GM12878 (cell line): ENCODE measurements at regions of chr16 and their contacts with region 1.

Region 1: GRCh38 chr16:27367461-27368357 is 34.3 kb upstream of the IL21R start:
- DNase-seq: peak; percentile 87
- ATAC-seq: peak; percentile 83
- H3K4me3 ChIP-seq: peak overlapping the region; percentile 46
- H3K27ac ChIP-seq: peak overlapping the region; percentile 95
- H3K4me1 ChIP-seq: peaks cover 34% of the 10 kb centered on the region
- H3K27me3 ChIP-seq: no peaks in the 10 kb centered on the region
- CTCF ChIP-seq: peak; percentile 84 to 91 (median 87)
- EP300 ChIP-seq: peak; percentile 72 to 86; a peak in 3 of 4 replicates
- POLR2A ChIP-seq: peak; percentile 54
- RAD21 ChIP-seq: peak; percentile 83

Region 2: DNA sequence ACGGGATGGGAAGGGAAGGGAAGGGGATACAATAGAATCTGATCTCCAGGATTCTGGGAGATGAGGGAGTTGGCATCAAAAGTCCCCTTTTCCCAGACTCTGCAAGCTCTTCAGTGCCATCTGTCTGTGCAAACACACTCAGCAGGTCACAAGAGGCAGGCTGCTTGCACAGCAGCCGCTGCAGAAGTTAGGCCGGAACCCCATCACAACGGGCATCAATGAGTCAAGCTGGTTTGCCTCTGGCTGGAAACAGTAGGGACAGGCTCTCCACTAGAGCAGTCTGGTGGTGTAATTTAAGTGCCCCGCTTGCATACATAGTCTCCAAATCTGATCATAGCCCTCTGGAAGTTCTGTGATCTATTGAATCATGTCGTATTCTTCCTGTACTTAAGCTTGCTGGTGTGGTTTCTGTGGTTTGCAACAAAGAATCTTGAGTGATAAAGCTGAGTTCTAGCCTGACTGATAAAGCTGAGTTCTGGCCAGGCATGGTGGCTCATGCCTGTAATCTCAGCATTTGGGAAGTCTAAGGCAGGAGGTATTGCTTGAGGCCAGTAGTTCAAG is 198.1 kb before region 1 on chr16:
- CTCF ChIA-PET with region 1: interaction called, 150 read pairs
- POLR2A ChIA-PET with region 1: no interaction called
- RAD21 ChIA-PET with region 1: interaction called, 13 read pairs
- SMC1A ChIA-PET with region 1: interaction called, 6 read pairs
- in situ Hi-C with region 1: no loop called
- intact Hi-C with region 1: no loop called
- DNase-seq: peak; percentile 13
- ATAC-seq: peak; percentile 84
- H3K4me3 ChIP-seq: no peak overlapping the region
- H3K27ac ChIP-seq: no peak overlapping the region
- H3K4me1 ChIP-seq: peaks cover 13% of the 10 kb centered on the region
- H3K27me3 ChIP-seq: 0 out of 4 replicates have a peak, but pooled peaks cover 0 to 2% of the 10 kb centered on the region in 2 experiments
- CTCF ChIP-seq: peak in 1 of 3 experiments; percentile 6; a peak in 2 of 6 replicates
- EP300 ChIP-seq: no peak
- POLR2A ChIP-seq: no peak
- RAD21 ChIP-seq: 0 out of 2 replicates have a peak, but pooled peaks have one; percentile 8

Region 3: GRCh38 chr16:27242868-27243590 is 124.7 kb before region 1 on chr16:
- CTCF ChIA-PET with region 1: interaction called, 259 read pairs
- POLR2A ChIA-PET with region 1: interaction called, 14 read pairs
- RAD21 ChIA-PET with region 1: interaction called, 168 read pairs
- SMC1A ChIA-PET with region 1: interaction called, 152 read pairs
- in situ Hi-C with region 1: no loop called
- intact Hi-C with region 1: no loop called
- DNase-seq: peak; percentile 71
- ATAC-seq: peak; percentile 91
- H3K4me3 ChIP-seq: peak overlapping the region; percentile 30; the same call in 1 of the 2 replicates
- H3K27ac ChIP-seq: peak overlapping the region; percentile 47
- H3K4me1 ChIP-seq: peaks cover 20% of the 10 kb centered on the region
- H3K27me3 ChIP-seq: no peaks in the 10 kb centered on the region
- CTCF ChIP-seq: no peak
- EP300 ChIP-seq: peak in 1 of 2 experiments; percentile 72; a peak in 2 of 4 replicates
- POLR2A ChIP-seq: no peak
- RAD21 ChIP-seq: no peak

Region 4: GRCh38 chr16:27286451-27286850 is 81.3 kb before region 1 on chr16:
- CTCF ChIA-PET with region 1: interaction called, 11 read pairs
- POLR2A ChIA-PET with region 1: interaction called, 4 read pairs
- RAD21 ChIA-PET with region 1: interaction called, 11 read pairs
- SMC1A ChIA-PET with region 1: interaction called, 6 read pairs
- in situ Hi-C with region 1: no loop called
- intact Hi-C with region 1: no loop called
- DNase-seq: no peak
- ATAC-seq: no peak
- H3K4me3 ChIP-seq: no peak overlapping the region
- H3K27ac ChIP-seq: no peak overlapping the region
- H3K4me1 ChIP-seq: peaks cover 40% of the 10 kb centered on the region
- H3K27me3 ChIP-seq: 0 out of 4 replicates have a peak, but pooled peaks cover 0 to 3% of the 10 kb centered on the region in 2 experiments
- CTCF ChIP-seq: no peak
- EP300 ChIP-seq: no peak
- POLR2A ChIP-seq: no peak
- RAD21 ChIP-seq: no peak

Region 5: DNA sequence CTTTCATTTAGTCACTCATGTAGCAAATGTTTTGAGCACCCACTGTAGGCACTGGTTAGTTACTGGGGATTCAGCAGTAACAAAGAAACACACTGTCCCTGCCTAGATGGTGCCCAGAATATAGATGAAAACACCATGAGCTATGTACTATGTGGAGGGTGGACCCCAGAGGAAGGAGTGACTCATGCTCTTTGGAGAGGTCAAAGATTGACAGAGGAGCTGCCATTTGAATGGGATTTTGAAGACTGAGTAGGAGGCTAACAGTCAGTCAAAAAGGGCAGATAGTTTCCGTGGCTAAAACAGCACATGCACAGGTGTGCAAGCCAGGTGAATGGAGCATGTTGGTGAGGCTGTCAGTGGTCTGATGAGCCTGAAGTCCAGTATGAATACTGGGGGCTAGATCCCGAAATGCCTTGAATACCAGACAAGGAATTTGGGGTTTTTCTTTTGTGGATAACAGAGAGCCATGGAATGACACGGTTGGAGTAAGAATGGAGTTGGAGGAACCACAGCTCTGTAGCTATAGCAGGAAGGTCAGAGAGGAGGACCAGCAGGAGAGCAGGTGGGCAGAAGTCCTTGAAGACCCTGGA is 40.4 kb after region 1 on chr16:
- CTCF ChIA-PET with region 1: interaction called, 34 read pairs
- POLR2A ChIA-PET with region 1: interaction called, 208 read pairs
- RAD21 ChIA-PET with region 1: interaction called, 224 read pairs
- SMC1A ChIA-PET with region 1: interaction called, 220 read pairs
- in situ Hi-C with region 1: no loop called
- intact Hi-C with region 1: no loop called
- DNase-seq: peak; percentile 76
- ATAC-seq: peak; percentile 51
- H3K4me3 ChIP-seq: peak overlapping the region; percentile 86
- H3K27ac ChIP-seq: peak overlapping the region; percentile 97
- H3K4me1 ChIP-seq: peaks cover 28% of the 10 kb centered on the region
- H3K27me3 ChIP-seq: no peaks in the 10 kb centered on the region
- CTCF ChIP-seq: no peak
- EP300 ChIP-seq: peak in 1 of 2 experiments; percentile 11; a peak in 1 of 4 replicates
- POLR2A ChIP-seq: peak; percentile 53; the same call in 1 of the 2 replicates
- RAD21 ChIP-seq: no peak

Region 6: GRCh38 chr16:27461483-27462171 is 93.9 kb after region 1 on chr16:
- CTCF ChIA-PET with region 1: interaction called, 6 read pairs
- POLR2A ChIA-PET with region 1: no interaction called
- RAD21 ChIA-PET with region 1: interaction called, 4 read pairs
- SMC1A ChIA-PET with region 1: interaction called, 5 read pairs
- in situ Hi-C with region 1: no loop called
- intact Hi-C with region 1: loop called (anchors 1 kb)
- DNase-seq: no peak
- ATAC-seq: no peak
- H3K4me3 ChIP-seq: no peak overlapping the region
- H3K27ac ChIP-seq: no peak overlapping the region
- H3K4me1 ChIP-seq: peaks cover 4% of the 10 kb centered on the region
- H3K27me3 ChIP-seq: no peaks in the 10 kb centered on the region
- CTCF ChIP-seq: no peak
- EP300 ChIP-seq: no peak
- POLR2A ChIP-seq: no peak
- RAD21 ChIP-seq: no peak

Region 7: GRCh38 chr16:27495191-27495590 is 127.5 kb after region 1 on chr16:
- CTCF ChIA-PET with region 1: no interaction called
- POLR2A ChIA-PET with region 1: no interaction called
- RAD21 ChIA-PET with region 1: no interaction called
- SMC1A ChIA-PET with region 1: no interaction called
- in situ Hi-C with region 1: no loop called
- intact Hi-C with region 1: no loop called
- DNase-seq: no peak
- ATAC-seq: no peak
- H3K4me3 ChIP-seq: no peak overlapping the region
- H3K27ac ChIP-seq: no peak overlapping the region
- H3K4me1 ChIP-seq: no peaks in the 10 kb centered on the region
- H3K27me3 ChIP-seq: no peaks in the 10 kb centered on the region
- CTCF ChIP-seq: no peak
- EP300 ChIP-seq: no peak
- POLR2A ChIP-seq: no peak
- RAD21 ChIP-seq: no peak

Region 8: GRCh38 chr16:27795992-27796614 is 428.4 kb after region 1 on chr16:
- CTCF ChIA-PET with region 1: no interaction called
- POLR2A ChIA-PET with region 1: no interaction called
- RAD21 ChIA-PET with region 1: no interaction called
- SMC1A ChIA-PET with region 1: no interaction called
- in situ Hi-C with region 1: no loop called
- intact Hi-C with region 1: no loop called
- DNase-seq: no peak
- ATAC-seq: no peak
- H3K4me3 ChIP-seq: no peak overlapping the region
- H3K27ac ChIP-seq: no peak overlapping the region
- H3K4me1 ChIP-seq: no peaks in the 10 kb centered on the region
- H3K27me3 ChIP-seq: no peaks in the 10 kb centered on the region; a peak in 1 of 4 replicates
- CTCF ChIP-seq: no peak
- EP300 ChIP-seq: no peak
- POLR2A ChIP-seq: no peak
- RAD21 ChIP-seq: no peak